Activated CD4-positive, alpha-beta memory T cell treated with anti-CD3 and anti-CD28 coated beads, Interleukin-2, amount 10 ng/mL, durations not matched to agents 7 days and 5 days (primary cell): ENCODE measurements at regions of chr19 and their contacts with region 1.

Region 1: GRCh38 chr19:47813304-47814004 is 8.3 kb upstream of the CRX start:
- DNase-seq: peak; percentile 78
- H3K4me3 Mint-ChIP-seq: no peak overlapping the region
- H3K27ac Mint-ChIP-seq: no peak overlapping the region
- H3K4me1 Mint-ChIP-seq: no peaks in the 10 kb centered on the region
- H3K27me3 Mint-ChIP-seq: no peaks in the 10 kb centered on the region

Region 2: DNA sequence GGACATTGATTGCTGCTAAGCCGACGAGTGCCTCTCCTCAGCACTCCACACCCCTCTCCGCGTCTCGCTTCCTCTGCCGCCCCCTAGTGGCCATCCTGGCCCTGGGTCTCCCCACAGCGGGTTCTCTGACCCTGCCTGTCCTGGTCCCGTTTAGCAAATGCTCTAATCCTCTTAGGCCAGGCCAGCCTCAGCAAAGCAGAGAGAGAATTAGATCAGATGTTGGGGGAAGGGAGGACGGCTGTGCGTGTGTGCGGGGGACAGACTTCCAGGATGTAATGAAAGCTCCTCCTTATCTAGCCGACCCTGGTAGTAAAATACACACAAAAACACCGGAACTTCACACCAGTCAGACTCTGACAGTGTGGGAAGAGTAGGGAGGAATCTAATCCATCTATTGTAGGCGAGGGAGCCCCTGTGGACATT is 50.1 kb after region 1 on chr19:
- CTCF ChIA-PET with region 1: interaction called, 11 read pairs
- POLR2A ChIA-PET with region 1: no interaction called
- DNase-seq: peak; percentile 82
- H3K4me3 Mint-ChIP-seq: no peak overlapping the region
- H3K27ac Mint-ChIP-seq: no peak overlapping the region
- H3K4me1 Mint-ChIP-seq: no peaks in the 10 kb centered on the region
- H3K27me3 Mint-ChIP-seq: peaks cover 10% of the 10 kb centered on the region